ENCODE measurements at regions of chr4 and their contacts with region 1.

Region 1: GRCh38 chr4:187993827-187994226 is 1.7 kb upstream of the ZFP42 start:
- DNase-seq: peak; percentile 61
- H3K4me3 Mint-ChIP-seq: no peak overlapping the region
- H3K27ac Mint-ChIP-seq: peak overlapping the region; percentile 63
- H3K4me1 Mint-ChIP-seq: no peaks in the 10 kb centered on the region
- H3K27me3 Mint-ChIP-seq: no peaks in the 10 kb centered on the region
- CTCF ChIP-seq: peak; percentile 32

Region 2: DNA sequence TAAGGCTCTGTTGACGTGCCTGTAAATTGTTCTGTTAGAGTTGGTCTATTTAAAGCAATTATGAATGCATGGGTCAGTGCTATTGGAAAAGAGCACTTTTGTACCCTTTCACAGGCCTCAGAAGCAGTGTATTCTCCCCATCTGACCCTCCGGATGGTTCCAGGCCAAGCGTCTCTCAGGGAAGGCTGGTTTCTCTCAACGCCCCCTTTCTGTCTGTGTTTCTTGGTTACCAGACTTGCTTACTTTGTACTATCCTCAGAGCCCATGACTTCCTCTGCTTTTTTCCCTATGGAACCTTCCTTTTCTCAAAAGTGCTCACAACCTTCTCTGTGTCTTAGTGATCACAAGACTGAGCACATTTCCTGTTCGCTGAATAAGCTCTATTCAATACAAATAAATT is 557.6 kb before region 1 on chr4:
- CTCF ChIA-PET with region 1: no interaction called
- POLR2A ChIA-PET with region 1: no interaction called
- intact Hi-C with region 1: no loop called
- DNase-seq: no peak
- H3K4me3 Mint-ChIP-seq: no peak overlapping the region
- H3K27ac Mint-ChIP-seq: no peak overlapping the region
- H3K4me1 Mint-ChIP-seq: no peaks in the 10 kb centered on the region
- H3K27me3 Mint-ChIP-seq: no peaks in the 10 kb centered on the region
- CTCF ChIP-seq: no peak

Region 3: DNA sequence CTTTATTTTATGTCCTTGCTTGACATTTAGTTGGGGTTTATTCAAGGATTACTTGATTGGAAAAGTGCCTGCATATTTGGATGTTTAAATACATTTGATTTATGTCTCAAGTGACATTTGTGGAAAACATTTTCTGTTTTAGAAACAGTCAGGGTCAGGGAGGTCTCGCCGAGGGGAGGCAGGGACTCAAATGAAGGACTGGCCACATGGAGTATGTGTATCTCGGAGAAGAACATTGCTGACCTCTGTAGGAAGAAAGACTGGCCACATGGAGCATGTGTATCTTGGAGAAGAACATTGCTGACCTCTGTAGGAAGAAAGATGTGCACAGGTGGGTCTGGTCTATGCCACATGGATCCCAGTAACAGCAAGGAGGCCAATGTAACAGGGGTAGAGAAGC is 379.0 kb after region 1 on chr4:
- CTCF ChIA-PET with region 1: no interaction called
- POLR2A ChIA-PET with region 1: no interaction called
- intact Hi-C with region 1: loop called (anchors 2 kb)
- DNase-seq: peak; percentile 59
- H3K4me3 Mint-ChIP-seq: no peak overlapping the region
- H3K27ac Mint-ChIP-seq: peak overlapping the region; percentile 68
- H3K4me1 Mint-ChIP-seq: peaks cover 5% of the 10 kb centered on the region
- H3K27me3 Mint-ChIP-seq: no peaks in the 10 kb centered on the region
- CTCF ChIP-seq: peak; percentile 53